ENCODE measurements at regions of chr11 and their contacts with region 1.

Region 1: DNA sequence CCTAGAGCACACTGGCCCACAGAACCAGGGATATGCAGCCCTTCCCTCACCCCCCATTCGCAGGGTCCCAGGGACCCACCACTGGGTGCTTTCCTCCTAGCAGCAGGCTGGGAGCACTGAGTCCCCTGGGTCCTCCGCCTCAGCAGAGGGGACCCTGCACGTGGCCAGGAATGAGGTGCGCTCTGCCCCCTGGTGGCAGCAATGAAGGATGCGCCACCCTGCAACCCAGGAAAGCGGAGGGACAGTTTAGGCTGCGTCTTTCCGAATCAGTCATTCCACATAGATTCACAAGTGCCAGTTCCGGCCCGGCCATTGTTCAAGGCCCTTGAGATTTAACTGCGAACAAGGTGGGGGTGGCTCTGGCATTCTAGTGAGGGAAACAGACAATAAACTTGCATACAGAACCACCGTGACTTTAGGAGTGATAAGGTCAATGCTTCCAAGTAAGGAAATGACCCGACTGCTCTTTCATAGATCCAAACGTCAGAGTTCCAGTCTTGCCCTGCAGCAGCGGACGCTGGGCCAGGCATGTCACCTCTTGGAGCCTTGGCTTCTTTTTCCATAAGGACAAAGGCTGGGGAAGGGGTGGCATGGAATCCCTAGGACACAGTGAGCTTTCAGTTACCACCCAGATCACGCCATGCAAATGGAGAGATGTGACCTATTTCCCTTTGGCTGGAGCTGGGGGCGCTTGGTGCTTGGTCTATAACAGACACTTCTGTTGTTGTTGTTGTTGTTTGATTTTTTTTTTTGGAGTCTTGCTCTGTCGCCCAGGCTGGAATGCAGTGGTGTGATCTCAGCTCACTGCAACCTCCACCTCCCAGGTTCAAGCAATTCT is 7.7 kb downstream of the RIN1 start:
- DNase-seq: peak; percentile 73
- H3K4me3 Mint-ChIP-seq: peak overlapping the region; percentile 59
- H3K27ac Mint-ChIP-seq: peak overlapping the region; percentile 61
- H3K4me1 Mint-ChIP-seq: peaks cover 25% of the 10 kb centered on the region
- H3K27me3 Mint-ChIP-seq: no peaks in the 10 kb centered on the region

Region 2: GRCh38 chr11:66242095-66242765 is 86.3 kb before region 1 on chr11:
- intact Hi-C with region 1: no loop called
- DNase-seq: no peak
- H3K4me3 Mint-ChIP-seq: no peak overlapping the region
- H3K27ac Mint-ChIP-seq: no peak overlapping the region
- H3K4me1 Mint-ChIP-seq: no peaks in the 10 kb centered on the region
- H3K27me3 Mint-ChIP-seq: no peaks in the 10 kb centered on the region

Region 3: GRCh38 chr11:66258473-66258893 is 70.0 kb before region 1 on chr11:
- intact Hi-C with region 1: loop called (anchors 2 kb)
- DNase-seq: no peak
- H3K4me3 Mint-ChIP-seq: peak overlapping the region; percentile 93
- H3K27ac Mint-ChIP-seq: peak overlapping the region; percentile 61
- H3K4me1 Mint-ChIP-seq: peaks cover 21% of the 10 kb centered on the region
- H3K27me3 Mint-ChIP-seq: no peaks in the 10 kb centered on the region

Region 4: DNA sequence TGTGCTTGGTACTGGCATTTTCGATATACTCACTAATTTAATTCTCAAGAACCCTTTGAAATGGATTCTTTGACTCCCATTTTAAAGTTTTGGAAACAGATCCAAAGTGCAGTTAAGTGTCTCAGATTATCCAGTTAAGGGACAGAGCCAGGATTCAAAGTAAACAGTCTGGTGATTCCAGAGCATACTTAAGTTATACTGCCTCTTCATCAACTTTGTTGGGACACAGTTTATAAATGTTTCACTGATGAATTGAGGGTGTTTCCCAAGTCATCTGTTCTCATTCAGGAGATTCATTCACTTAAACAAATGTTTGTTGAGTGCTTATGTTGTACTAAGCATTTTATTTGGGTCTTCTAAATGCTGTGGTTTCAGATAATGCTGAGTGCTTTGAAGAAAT is 807.6 kb after region 1 on chr11:
- intact Hi-C with region 1: no loop called
- DNase-seq: no peak
- H3K4me3 Mint-ChIP-seq: no peak overlapping the region
- H3K27ac Mint-ChIP-seq: no peak overlapping the region
- H3K4me1 Mint-ChIP-seq: no peaks in the 10 kb centered on the region
- H3K27me3 Mint-ChIP-seq: no peaks in the 10 kb centered on the region